AG04450 (cell line): ENCODE measurements at regions of chr5 and their contacts with region 1.

Region 1: DNA sequence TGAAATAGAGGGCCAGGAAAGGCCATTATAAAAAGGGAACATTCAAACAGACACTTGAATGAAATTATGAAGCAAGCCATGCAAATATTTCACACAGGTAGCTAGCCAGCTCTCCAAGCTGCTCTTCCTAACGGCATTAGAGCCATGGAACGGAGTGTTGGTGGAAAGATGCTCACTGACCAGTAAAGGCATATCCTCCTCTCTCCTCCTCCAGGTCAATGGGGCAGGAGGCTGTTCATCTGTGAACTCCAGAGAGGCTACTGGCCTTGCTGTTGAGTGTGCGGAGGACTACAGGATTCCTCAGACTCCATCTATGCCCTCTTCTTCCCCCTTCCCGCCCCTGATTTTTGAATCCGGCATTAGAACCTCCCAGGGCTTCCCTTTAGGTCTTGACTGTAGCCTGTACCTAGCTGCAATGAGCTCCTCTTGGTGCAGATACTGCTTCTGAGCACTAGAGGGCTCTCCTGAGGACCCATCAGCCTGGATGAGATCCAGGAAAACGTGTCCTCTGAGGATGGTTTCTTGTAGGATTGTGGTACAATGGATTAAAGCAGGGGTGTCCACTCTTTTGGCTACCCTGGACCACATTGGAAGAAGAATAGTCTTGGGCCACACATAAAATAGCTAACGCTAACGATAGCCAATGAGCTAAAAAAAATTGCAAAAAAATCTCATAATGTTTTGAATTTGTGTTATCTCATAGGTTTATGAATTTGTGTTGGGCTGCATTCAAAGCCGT is 162.2 kb downstream of the SREK1 start:
- DNase-seq: peak; percentile 38
- H3K4me3 ChIP-seq: no peak overlapping the region
- H3K27ac ChIP-seq: no peak overlapping the region
- H3K27me3 ChIP-seq: peaks cover 2% of the 10 kb centered on the region
- CTCF ChIP-seq: peak; percentile 92

Region 2: DNA sequence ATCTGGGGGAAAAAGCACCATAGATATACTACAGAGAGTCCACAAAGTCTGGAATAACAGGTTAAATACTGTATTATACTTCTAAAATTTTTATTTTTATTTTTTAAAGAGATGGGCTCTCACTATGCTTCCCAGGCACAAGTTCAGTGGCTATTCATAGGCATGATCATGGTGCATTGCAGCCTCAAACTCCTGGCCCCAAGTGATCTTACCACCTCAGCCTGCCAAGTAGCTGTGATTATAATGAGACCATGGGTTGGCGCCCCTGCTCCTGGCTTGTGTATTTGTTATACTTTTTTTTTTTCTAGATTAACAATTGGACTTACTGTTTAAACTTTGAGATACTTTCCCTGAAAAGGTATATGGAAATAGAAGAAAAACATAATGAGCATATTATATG is 354.0 kb before region 1 on chr5:
- CTCF ChIA-PET with region 1: no interaction called
- POLR2A ChIA-PET with region 1: no interaction called
- DNase-seq: no peak
- H3K4me3 ChIP-seq: no peak overlapping the region
- H3K27ac ChIP-seq: no peak overlapping the region
- H3K27me3 ChIP-seq: no peaks in the 10 kb centered on the region
- CTCF ChIP-seq: no peak

Region 3: DNA sequence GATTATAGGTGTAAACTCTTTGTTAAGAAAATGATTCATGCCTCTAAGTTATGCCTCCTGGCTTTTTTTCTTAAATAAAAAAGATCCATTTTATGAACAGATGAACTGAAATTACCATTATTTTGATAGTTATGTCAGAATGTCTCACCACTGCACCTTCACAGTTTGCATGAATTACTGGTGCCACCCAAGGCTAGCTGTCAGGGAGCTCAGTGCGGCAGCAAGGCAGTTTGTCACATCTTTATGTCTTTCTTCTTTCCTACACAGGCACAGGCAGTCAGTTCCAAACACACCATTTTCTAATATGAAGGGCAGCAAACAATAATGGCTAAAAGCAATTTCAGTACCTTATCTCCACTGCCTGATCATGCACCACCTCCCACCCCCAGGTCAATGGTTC is 14.5 kb before region 1 on chr5:
- CTCF ChIA-PET with region 1: interaction called, 15 read pairs
- POLR2A ChIA-PET with region 1: no interaction called
- DNase-seq: no peak
- H3K4me3 ChIP-seq: no peak overlapping the region
- H3K27ac ChIP-seq: no peak overlapping the region
- H3K27me3 ChIP-seq: no peaks in the 10 kb centered on the region
- CTCF ChIP-seq: no peak

Region 4: GRCh38 chr5:66324357-66324756 is 18.1 kb after region 1 on chr5:
- CTCF ChIA-PET with region 1: interaction called, 25 read pairs
- POLR2A ChIA-PET with region 1: no interaction called
- DNase-seq: no peak
- H3K4me3 ChIP-seq: no peak overlapping the region
- H3K27ac ChIP-seq: no peak overlapping the region
- H3K27me3 ChIP-seq: peaks cover 3% of the 10 kb centered on the region
- CTCF ChIP-seq: no peak

Region 5: GRCh38 chr5:66595756-66596635 is 289.7 kb after region 1 on chr5 and contains the start of gene MAST4:
- CTCF ChIA-PET with region 1: interaction called, 10 read pairs
- POLR2A ChIA-PET with region 1: no interaction called
- DNase-seq: peak; percentile 37
- H3K4me3 ChIP-seq: peak within 1 kb of the TSS; percentile 57
- H3K27ac ChIP-seq: no peak within 1 kb of the TSS
- H3K27me3 ChIP-seq: peaks cover 44% of the 10 kb centered on the region
- CTCF ChIP-seq: no peak
- polyA plus RNA-seq, gene MAST4: 11.6 and 13.2 TPM in 2 replicates

Region 6: DNA sequence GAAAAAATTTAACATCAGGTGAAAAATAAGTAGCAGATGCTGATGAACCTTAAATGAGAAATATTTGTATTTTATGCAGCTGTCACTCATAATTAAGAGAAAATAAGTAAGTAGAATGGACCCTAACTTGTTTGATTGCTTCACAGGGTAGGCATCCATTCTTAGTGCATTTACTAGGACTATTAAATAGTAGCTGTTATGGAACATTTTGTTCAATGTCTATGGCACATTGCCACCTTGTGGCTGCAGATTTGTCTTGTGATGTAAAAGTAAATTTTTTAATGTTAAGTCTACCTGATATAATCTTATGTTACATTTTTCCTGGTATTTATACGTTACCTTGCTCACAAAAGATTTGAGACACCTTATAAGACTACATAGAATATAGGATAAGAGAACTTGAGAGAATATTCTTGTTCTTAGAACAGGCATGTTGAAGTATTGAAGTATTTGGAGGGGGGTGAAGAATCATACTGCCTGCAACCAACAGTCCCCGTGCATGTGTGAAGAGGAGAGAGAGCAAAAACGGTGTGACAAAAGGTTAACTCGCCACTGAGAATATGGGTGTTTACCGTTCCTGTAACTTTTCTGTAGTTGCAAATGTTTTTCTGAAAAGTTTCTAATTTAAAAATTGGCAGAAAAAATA is 451.0 kb after region 1 on chr5:
- CTCF ChIA-PET with region 1: interaction called, 71 read pairs
- POLR2A ChIA-PET with region 1: no interaction called
- DNase-seq: peak; percentile 6
- H3K4me3 ChIP-seq: no peak overlapping the region
- H3K27ac ChIP-seq: no peak overlapping the region
- H3K27me3 ChIP-seq: no peaks in the 10 kb centered on the region
- CTCF ChIP-seq: peak; percentile 38; the same call in 1 of the 2 replicates